ENCODE measurements at regions of chr13 and their contacts with region 1.

Region 1: GRCh38 chr13:26184791-26185250 is 37.3 kb downstream of the RNF6 start:
- DNase-seq: peak; percentile 81
- H3K4me3 ChIP-seq: no peak overlapping the region
- H3K27ac ChIP-seq: peak overlapping the region in 2 of 8 donors; percentile 89 to 90
- H3K4me1 ChIP-seq: peaks cover 12 to 39% (median 28%) of the 10 kb centered on the region in 6 donors
- H3K27me3 ChIP-seq: no peaks in the 10 kb centered on the region
- CTCF ChIP-seq: peak; percentile 70 to 94 (median 84)
- POLR2A ChIP-seq: no peak

Region 2: DNA sequence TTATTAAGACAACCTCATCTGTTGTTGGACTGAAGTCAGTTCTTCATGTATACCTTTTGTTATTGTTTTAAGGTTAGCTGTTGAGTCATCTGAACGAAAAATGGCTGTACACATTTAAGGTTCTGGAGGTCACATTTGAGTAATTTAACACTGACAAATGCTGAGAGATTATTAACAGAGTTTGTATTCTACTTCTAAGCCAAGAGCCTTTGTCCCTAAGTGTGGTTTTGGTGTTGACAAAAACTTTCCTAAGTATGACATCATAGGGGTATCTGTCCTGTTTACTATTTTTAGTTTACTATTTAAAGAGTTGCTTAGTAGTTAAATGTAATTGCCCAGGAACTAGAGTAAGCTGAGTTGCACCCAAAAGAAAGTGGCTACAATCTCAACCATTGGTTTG is 141.1 kb after region 1 on chr13:
- intact Hi-C with region 1: no loop called
- DNase-seq: no peak
- H3K4me3 ChIP-seq: no peak overlapping the region
- H3K27ac ChIP-seq: no peak overlapping the region
- H3K4me1 ChIP-seq: peaks cover 0 to 18% (median 0%) of the 10 kb centered on the region in 6 donors
- H3K27me3 ChIP-seq: no peaks in the 10 kb centered on the region
- CTCF ChIP-seq: no peak
- POLR2A ChIP-seq: no peak

Region 3: GRCh38 chr13:26498656-26499591 is 314.1 kb after region 1 on chr13:
- intact Hi-C with region 1: loop called (anchors 5 kb)
- DNase-seq: no peak
- H3K4me3 ChIP-seq: no peak overlapping the region
- H3K27ac ChIP-seq: no peak overlapping the region
- H3K4me1 ChIP-seq: peaks cover 0 to 18% (median 7%) of the 10 kb centered on the region in 6 donors
- H3K27me3 ChIP-seq: peaks cover 0 to 29% (median 0%) of the 10 kb centered on the region in 7 donors
- CTCF ChIP-seq: no peak
- POLR2A ChIP-seq: no peak